GM12878 (cell line): ENCODE measurements at regions of chr17 and their contacts with region 1.

Region 1: GRCh38 chr17:48593840-48594537 is 410 bp upstream of the HOXB5 start:
- DNase-seq: no peak
- ATAC-seq: peak; percentile 75
- H3K4me3 ChIP-seq: no peak overlapping the region; the same call in 1 of the 2 replicates
- H3K27ac ChIP-seq: no peak overlapping the region
- H3K4me1 ChIP-seq: peaks cover 10% of the 10 kb centered on the region
- H3K27me3 ChIP-seq: peaks cover 5 to 33% of the 10 kb centered on the region in 2 experiments
- CTCF ChIP-seq: peak; percentile 91 to 97 (median 94)
- EP300 ChIP-seq: no peak
- POLR2A ChIP-seq: no peak
- RAD21 ChIP-seq: peak; percentile 80

Region 2: DNA sequence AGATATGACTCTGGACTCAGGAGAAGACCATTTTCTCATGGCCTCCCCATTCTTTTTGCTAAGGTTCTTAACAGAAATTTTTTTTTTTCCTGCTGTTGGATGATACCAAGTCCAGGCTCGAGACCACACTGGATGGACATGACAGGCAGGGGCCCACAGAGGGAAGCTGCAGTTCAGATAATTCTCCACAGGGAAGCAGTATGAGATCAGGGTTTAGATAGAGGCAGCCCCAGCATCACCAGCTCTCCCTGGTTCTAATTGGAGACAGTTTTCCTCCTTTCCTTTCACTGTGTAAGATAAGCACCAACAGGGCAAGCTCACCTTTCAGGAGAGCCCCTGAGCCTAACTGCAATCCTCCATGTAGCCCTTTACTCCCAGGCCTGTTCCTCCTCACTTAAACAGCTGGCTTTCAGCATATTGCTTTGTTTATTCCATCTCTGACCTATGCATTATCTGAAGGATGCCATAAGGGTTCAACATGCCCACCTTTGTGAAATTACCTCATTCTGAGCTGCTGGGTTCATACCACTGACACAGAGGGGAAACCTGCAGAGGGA is 378.3 kb before region 1 on chr17:
- CTCF ChIA-PET with region 1: interaction called, 10 read pairs
- POLR2A ChIA-PET with region 1: interaction called, 3 read pairs
- RAD21 ChIA-PET with region 1: interaction called, 5 read pairs
- SMC1A ChIA-PET with region 1: interaction called, 16 read pairs
- in situ Hi-C with region 1: no loop called
- intact Hi-C with region 1: no loop called
- DNase-seq: no peak
- ATAC-seq: peak; percentile 63
- H3K4me3 ChIP-seq: no peak overlapping the region
- H3K27ac ChIP-seq: no peak overlapping the region
- H3K4me1 ChIP-seq: no peaks in the 10 kb centered on the region
- H3K27me3 ChIP-seq: no peaks in the 10 kb centered on the region
- CTCF ChIP-seq: peak; percentile 25 to 53 (median 50); a peak in 5 of 6 replicates
- EP300 ChIP-seq: no peak
- POLR2A ChIP-seq: no peak
- RAD21 ChIP-seq: peak; percentile 67

Region 3: DNA sequence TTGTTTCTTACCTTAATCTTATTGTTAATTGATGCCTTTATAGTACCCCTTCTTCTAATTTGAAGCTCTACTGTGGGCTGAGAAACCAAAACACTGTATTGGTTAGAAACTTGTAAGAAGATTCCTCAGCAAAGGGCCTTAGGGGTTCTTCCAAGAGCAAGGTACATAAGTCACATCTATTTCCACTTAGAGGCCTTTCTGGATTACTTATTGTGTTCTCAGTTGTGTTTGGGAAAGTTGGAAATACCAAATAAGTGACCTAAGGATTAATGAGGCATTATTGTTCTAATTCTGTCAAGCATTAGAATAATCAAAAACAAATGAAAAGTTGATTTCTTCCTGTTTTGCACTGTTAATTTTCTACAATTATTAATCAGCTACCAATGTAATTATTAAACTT is 249.7 kb before region 1 on chr17:
- CTCF ChIA-PET with region 1: interaction called, 47 read pairs
- POLR2A ChIA-PET with region 1: no interaction called
- RAD21 ChIA-PET with region 1: interaction called, 9 read pairs
- SMC1A ChIA-PET with region 1: interaction called, 39 read pairs
- in situ Hi-C with region 1: no loop called
- intact Hi-C with region 1: no loop called
- DNase-seq: no peak
- ATAC-seq: no peak
- H3K4me3 ChIP-seq: no peak overlapping the region
- H3K27ac ChIP-seq: no peak overlapping the region
- H3K4me1 ChIP-seq: no peaks in the 10 kb centered on the region
- H3K27me3 ChIP-seq: no peaks in the 10 kb centered on the region
- CTCF ChIP-seq: no peak
- EP300 ChIP-seq: no peak
- POLR2A ChIP-seq: no peak
- RAD21 ChIP-seq: no peak

Region 4: GRCh38 chr17:48618256-48618897 is 24.4 kb after region 1 on chr17:
- CTCF ChIA-PET with region 1: interaction called, 11 read pairs
- POLR2A ChIA-PET with region 1: no interaction called
- RAD21 ChIA-PET with region 1: interaction called, 7 read pairs
- SMC1A ChIA-PET with region 1: interaction called, 7 read pairs
- in situ Hi-C with region 1: no loop called
- intact Hi-C with region 1: no loop called
- DNase-seq: no peak
- ATAC-seq: peak; percentile 88
- H3K4me3 ChIP-seq: no peak overlapping the region
- H3K27ac ChIP-seq: no peak overlapping the region
- H3K4me1 ChIP-seq: no peaks in the 10 kb centered on the region
- H3K27me3 ChIP-seq: peaks cover 36 to 46% of the 10 kb centered on the region in 2 experiments
- CTCF ChIP-seq: peak; percentile 94 to 97 (median 96)
- EP300 ChIP-seq: no peak
- POLR2A ChIP-seq: no peak
- RAD21 ChIP-seq: peak; percentile 85

Region 5: DNA sequence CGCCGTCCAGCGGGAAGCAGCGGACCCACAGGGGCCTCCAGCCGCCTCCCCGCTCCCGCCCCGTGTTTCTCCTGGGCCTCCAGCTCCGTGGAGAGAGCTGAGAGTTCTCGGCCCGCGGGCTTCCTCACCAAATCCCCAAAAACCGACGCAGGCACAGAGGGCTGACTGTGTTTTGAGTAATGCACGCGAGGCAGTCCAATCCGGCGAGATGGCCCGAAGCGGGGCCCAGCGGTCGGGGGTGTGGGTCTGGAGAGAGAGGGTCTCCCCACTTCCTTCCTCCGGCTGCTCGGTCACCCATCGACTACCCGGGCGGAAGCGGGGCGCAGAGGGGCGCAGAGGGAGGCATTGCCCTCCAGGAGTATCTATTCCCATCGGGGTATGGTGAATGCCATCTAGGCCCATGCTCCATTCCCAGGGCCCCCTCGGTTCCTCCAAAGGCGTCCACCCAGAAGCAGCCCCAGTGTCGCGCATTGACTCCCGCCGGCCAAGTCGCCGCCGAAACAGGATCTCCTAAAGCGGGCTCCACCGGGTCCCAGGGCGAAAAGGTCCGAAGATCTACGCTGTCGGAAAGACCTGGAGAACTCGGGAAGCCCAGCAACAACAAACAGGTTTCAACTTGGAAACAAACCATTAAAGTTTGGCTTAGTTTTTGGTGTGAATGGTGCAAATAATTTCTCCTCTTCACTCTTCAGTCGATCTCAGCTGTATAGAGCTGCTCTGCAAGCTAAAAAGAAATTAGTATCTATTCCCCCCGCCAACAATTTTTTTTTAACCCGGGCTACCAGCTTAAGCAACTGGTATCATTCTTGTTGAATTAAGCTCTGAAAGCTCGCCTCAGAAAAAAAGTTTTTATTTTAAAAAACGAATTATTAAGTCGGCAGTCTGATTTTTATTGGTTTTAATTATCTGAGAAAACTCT is 153.7 kb after region 1 on chr17:
- CTCF ChIA-PET with region 1: no interaction called
- POLR2A ChIA-PET with region 1: no interaction called
- RAD21 ChIA-PET with region 1: no interaction called
- SMC1A ChIA-PET with region 1: no interaction called
- in situ Hi-C with region 1: no loop called
- intact Hi-C with region 1: no loop called
- DNase-seq: no peak
- ATAC-seq: no peak
- H3K4me3 ChIP-seq: no peak overlapping the region
- H3K27ac ChIP-seq: no peak overlapping the region
- H3K4me1 ChIP-seq: no peaks in the 10 kb centered on the region
- H3K27me3 ChIP-seq: peaks cover 19 to 58% of the 10 kb centered on the region in 2 experiments
- CTCF ChIP-seq: no peak
- EP300 ChIP-seq: no peak
- POLR2A ChIP-seq: no peak
- RAD21 ChIP-seq: no peak